AG04449 (cell line): ENCODE measurements at regions of chr2 and their contacts with region 1.

Region 1: GRCh38 chr2:46364797-46365457 is 67.7 kb downstream of the EPAS1 start:
- DNase-seq: peak; percentile 12
- H3K4me3 ChIP-seq: no peak overlapping the region
- CTCF ChIP-seq: peak; percentile 54

Region 2: DNA sequence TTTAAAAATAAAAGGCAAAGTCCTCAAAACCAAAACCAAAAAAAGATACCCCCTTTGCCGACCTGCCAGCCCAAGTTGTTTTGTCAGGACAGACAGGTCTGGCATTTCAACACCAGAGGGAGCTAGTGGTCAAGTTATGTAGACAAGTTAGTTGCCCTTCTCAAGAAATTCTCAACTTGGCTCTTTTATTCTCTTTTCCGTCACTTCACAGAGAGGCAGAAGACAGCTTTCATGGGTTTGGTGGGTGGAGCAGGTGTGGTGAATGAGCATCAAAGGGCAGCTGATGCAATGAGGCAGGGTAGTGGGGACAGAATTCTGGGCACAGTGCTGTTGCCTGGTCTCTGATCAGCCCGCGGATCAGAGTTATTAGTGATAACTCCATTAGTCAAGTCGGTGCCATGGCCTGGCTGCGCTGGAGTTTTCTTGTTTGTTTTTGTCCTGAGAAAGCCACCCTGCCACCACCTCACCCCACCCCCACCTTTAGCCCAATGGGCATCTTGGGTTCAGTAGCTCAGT is 371.4 kb before region 1 on chr2:
- CTCF ChIA-PET with region 1: interaction called, 38 read pairs
- POLR2A ChIA-PET with region 1: no interaction called
- DNase-seq: no peak
- H3K4me3 ChIP-seq: no peak overlapping the region
- CTCF ChIP-seq: peak; percentile 70

Region 3: GRCh38 chr2:46010925-46011490 is 353.9 kb before region 1 on chr2:
- CTCF ChIA-PET with region 1: interaction called, 25 read pairs
- POLR2A ChIA-PET with region 1: no interaction called
- DNase-seq: no peak
- H3K4me3 ChIP-seq: no peak overlapping the region
- CTCF ChIP-seq: peak; percentile 37

Region 4: GRCh38 chr2:46309052-46309952 is 55.6 kb before region 1 on chr2:
- CTCF ChIA-PET with region 1: interaction called, 12 read pairs
- POLR2A ChIA-PET with region 1: no interaction called
- DNase-seq: no peak
- H3K4me3 ChIP-seq: no peak overlapping the region
- CTCF ChIP-seq: no peak

Region 5: GRCh38 chr2:46352616-46353015 is 12.3 kb before region 1 on chr2:
- CTCF ChIA-PET with region 1: interaction called, 29 read pairs
- POLR2A ChIA-PET with region 1: no interaction called
- DNase-seq: no peak
- H3K4me3 ChIP-seq: no peak overlapping the region
- CTCF ChIP-seq: no peak